Natural killer cell (primary cell): ENCODE measurements at regions of chr18 and their contacts with region 1.

Region 1: DNA sequence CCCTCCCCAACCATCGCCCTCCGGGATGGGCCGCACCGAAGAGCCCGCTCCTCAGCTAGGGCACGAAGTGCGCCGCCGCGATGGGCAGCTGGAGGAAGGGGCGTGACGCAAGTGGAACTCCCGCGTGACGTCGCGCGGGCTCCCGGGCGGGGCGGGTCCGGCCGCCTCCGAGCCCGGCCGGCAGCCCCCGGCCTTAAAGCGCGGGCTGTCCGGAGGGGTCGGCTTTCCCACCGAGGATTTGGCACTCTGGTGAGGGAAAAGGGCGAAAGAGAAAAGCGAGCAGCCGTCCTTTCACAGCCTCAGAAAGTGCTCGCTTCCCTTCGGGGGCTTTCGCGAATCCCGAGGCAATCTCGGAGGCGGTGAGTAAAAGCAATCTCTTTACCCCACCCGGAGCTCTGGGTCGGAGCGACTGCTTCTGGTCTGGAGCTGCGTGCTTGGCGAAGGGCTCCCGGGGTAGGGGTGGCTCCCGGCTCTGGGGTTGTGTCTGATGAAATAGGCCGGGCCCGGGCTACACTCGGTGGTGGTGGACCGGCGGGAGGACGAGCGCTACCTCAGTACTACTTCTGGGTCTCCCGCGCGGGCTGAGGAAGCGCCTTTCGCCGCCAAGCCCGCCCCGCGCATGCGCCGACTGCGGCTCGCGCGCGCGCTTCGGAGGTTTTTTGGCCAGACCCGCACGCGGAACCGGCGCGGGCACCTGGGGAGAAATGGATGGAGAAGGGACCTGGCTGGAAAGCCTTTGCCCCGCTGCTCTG is at the start of gene RBBP8:
- DNase-seq: peak; percentile 85 to 89
- ATAC-seq: peak; percentile 83 to 91 (median 85)
- H3K4me3 ChIP-seq: peak within 1 kb of the TSS; percentile 99
- H3K4me3 Mint-ChIP-seq: peak within 1 kb of the TSS; percentile 96
- H3K27ac ChIP-seq: peak within 1 kb of the TSS; percentile 99
- H3K27ac Mint-ChIP-seq: peak within 1 kb of the TSS; percentile 94 to 95
- H3K4me1 ChIP-seq: peaks cover 8% of the 10 kb centered on the region
- H3K4me1 Mint-ChIP-seq: peaks cover 14 to 15% of the 10 kb centered on the region in 2 donors
- H3K27me3 ChIP-seq: no peaks in the 10 kb centered on the region
- H3K27me3 Mint-ChIP-seq: no peaks in the 10 kb centered on the region
- CTCF ChIP-seq: no peak
- total RNA-seq, gene RBBP8: 11.6 to 18.7 (median 12.1) TPM

Region 2: DNA sequence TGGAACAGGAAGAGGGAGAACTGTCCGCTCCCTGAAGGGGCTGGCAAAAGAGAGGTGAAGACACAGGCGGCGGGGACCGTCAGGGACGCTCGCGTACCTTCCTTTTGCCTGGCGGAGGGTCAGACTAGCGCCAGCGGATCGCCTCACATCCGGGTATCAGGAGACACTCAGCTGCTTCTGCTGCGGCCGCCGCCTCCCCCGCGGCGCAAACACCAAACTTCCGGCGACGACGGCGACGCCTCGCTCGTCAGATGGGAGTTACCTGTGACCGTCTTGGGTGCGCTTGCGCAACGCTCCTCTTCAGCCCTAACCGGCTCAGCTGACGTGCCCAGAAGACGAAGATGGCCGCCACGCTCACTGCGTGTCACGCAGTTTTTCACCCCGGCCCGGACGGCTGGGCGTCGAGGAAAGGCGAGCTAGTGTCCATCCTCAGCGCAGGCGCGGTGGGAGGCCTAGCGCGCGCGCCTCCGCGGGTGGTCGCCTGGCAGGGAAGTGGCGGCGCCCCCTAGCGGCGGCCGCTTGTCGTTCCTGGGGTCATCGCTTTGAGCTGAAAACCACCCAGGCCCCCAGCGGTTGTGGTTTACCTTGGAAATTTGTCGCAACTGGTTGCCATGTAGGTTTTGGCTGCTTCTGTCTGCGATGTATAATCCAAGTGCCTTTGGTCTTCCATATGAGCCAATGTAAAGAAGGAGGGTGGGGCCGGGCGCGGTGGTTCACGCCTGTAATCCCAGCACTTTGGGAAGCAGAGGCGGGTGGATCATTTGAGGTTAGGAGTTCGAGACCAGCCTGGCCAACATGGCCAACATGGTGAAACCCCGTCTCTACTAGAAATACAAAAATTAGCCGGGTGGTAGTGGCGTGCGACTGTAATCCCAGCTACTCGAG is 1332.6 kb before region 1 on chr18 and contains the start of gene ESCO1:
- intact Hi-C with region 1: loop called (anchors 10 kb)
- DNase-seq: peak; percentile 94 to 99
- ATAC-seq: peak; percentile 87 to 95 (median 88)
- H3K4me3 ChIP-seq: peak within 1 kb of the TSS; percentile 97
- H3K4me3 Mint-ChIP-seq: peak within 1 kb of the TSS; percentile 98
- H3K27ac ChIP-seq: peak within 1 kb of the TSS; percentile 99
- H3K27ac Mint-ChIP-seq: peak within 1 kb of the TSS; percentile 97 to 99
- H3K4me1 ChIP-seq: peaks cover 22% of the 10 kb centered on the region
- H3K4me1 Mint-ChIP-seq: peaks cover 19 to 33% of the 10 kb centered on the region in 2 donors
- H3K27me3 ChIP-seq: no peaks in the 10 kb centered on the region
- H3K27me3 Mint-ChIP-seq: no peaks in the 10 kb centered on the region
- CTCF ChIP-seq: peak; percentile 99
- total RNA-seq, gene ESCO1: 40.5 to 43.4 (median 42.8) TPM

Region 3: DNA sequence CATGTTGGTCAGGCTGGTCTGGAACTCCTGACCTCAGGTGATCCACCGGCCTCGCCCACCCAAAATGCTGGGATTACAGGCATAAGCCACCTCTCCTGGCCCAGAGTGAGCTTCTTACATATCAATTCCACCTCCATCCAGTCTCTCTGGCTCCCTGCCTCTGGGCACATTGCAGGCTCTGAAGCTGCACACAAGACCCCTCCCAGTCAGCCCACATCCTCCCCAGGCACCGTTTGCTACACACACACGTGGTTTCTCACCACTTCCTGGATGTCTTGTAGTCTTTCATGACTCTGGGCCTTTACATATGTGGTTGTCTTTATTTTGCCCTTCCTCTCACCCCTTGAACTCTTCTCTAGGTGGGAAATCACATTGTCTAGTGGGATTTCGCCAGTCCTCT is 137.9 kb after region 1 on chr18:
- intact Hi-C with region 1: loop called (anchors 1 kb)
- DNase-seq: peak; percentile 81 to 94
- ATAC-seq: peak; percentile 90 to 96 (median 96)
- H3K4me3 ChIP-seq: no peak overlapping the region
- H3K4me3 Mint-ChIP-seq: peak overlapping the region; percentile 89
- H3K27ac ChIP-seq: peak overlapping the region; percentile 63
- H3K27ac Mint-ChIP-seq: peak overlapping the region; percentile 84 to 86
- H3K4me1 ChIP-seq: peaks cover 59% of the 10 kb centered on the region
- H3K4me1 Mint-ChIP-seq: peaks cover 52 to 56% of the 10 kb centered on the region in 2 donors
- H3K27me3 ChIP-seq: no peaks in the 10 kb centered on the region
- H3K27me3 Mint-ChIP-seq: no peaks in the 10 kb centered on the region
- CTCF ChIP-seq: no peak

Region 4: GRCh38 chr18:23099621-23100020 is 166.2 kb after region 1 on chr18:
- intact Hi-C with region 1: no loop called
- DNase-seq: no peak
- ATAC-seq: no peak
- H3K4me3 ChIP-seq: no peak overlapping the region
- H3K4me3 Mint-ChIP-seq: no peak overlapping the region
- H3K27ac ChIP-seq: no peak overlapping the region
- H3K27ac Mint-ChIP-seq: no peak overlapping the region
- H3K4me1 ChIP-seq: no peaks in the 10 kb centered on the region
- H3K4me1 Mint-ChIP-seq: no peaks in the 10 kb centered on the region
- H3K27me3 ChIP-seq: no peaks in the 10 kb centered on the region
- H3K27me3 Mint-ChIP-seq: peaks cover 0 to 7% of the 10 kb centered on the region in 2 donors
- CTCF ChIP-seq: no peak

Region 5: GRCh38 chr18:23357996-23358594 is 424.7 kb after region 1 on chr18:
- intact Hi-C with region 1: loop called (anchors 2 kb)
- DNase-seq: no peak
- ATAC-seq: peak in 1 of 3 donors; percentile 3
- H3K4me3 ChIP-seq: no peak overlapping the region
- H3K4me3 Mint-ChIP-seq: peak overlapping the region; percentile 76
- H3K27ac ChIP-seq: peak overlapping the region; percentile 30
- H3K27ac Mint-ChIP-seq: peak overlapping the region; percentile 75 to 85
- H3K4me1 ChIP-seq: peaks cover 26% of the 10 kb centered on the region
- H3K4me1 Mint-ChIP-seq: peaks cover 34 to 46% of the 10 kb centered on the region in 2 donors
- H3K27me3 ChIP-seq: no peaks in the 10 kb centered on the region
- H3K27me3 Mint-ChIP-seq: no peaks in the 10 kb centered on the region
- CTCF ChIP-seq: no peak

Region 6: GRCh38 chr18:23412351-23412964 is 479.1 kb after region 1 on chr18:
- intact Hi-C with region 1: loop called (anchors 5 kb)
- DNase-seq: no peak
- ATAC-seq: no peak
- H3K4me3 ChIP-seq: no peak overlapping the region
- H3K4me3 Mint-ChIP-seq: no peak overlapping the region
- H3K27ac ChIP-seq: no peak overlapping the region
- H3K27ac Mint-ChIP-seq: no peak overlapping the region
- H3K4me1 ChIP-seq: no peaks in the 10 kb centered on the region
- H3K4me1 Mint-ChIP-seq: peaks cover 0 to 7% of the 10 kb centered on the region in 2 donors
- H3K27me3 ChIP-seq: no peaks in the 10 kb centered on the region
- H3K27me3 Mint-ChIP-seq: no peaks in the 10 kb centered on the region
- CTCF ChIP-seq: no peak